ENCODE measurements at regions of chr2 and their contacts with region 1.

Region 1: GRCh38 chr2:234291765-234292204 is 205.1 kb downstream of the ARL4C start:
- DNase-seq: peak in 1 of 4 donors; percentile 31
- ATAC-seq: no peak
- H3K4me3 ChIP-seq: no peak overlapping the region
- H3K27ac ChIP-seq: peak overlapping the region in 1 of 2 donors; percentile 46
- H3K4me1 ChIP-seq: peaks cover 0 to 32% of the 10 kb centered on the region in 2 donors
- H3K27me3 ChIP-seq: no peaks in the 10 kb centered on the region
- CTCF ChIP-seq: no peak

Region 2: DNA sequence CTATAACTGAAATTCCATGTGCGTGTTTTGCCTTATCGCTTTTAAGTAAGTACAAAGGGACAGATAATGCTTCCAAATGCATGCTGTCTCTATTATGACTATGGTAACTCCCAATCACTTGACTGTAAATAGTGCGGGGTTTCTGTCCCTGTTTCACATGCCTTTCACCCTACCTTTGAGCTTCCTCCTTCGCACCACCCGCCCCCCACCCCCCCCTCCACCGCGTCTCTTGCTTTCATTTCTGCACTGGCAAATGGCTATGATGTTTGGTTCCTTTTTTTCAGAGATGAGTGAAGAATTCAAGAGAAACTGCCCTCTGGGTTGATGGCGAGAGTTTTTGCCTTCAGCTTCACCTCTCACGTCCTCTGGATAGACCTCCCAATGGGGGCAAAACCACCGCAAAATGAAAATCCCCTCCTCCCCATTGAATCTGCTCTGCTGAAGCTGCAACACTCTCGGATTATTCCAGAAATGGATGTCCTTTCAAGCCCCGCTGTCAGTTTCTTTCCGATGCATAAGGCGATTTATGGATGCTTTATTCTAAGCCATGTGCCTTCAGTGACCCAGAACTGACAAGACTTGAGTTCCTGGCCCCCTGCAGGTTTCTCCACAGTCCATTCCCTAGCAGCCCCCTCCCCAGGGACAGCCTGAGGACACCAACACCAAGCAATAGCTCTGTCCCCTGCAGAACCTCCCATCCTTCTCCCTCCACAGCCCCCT is 266.2 kb before region 1 on chr2:
- intact Hi-C with region 1: no loop called
- DNase-seq: no peak
- ATAC-seq: no peak
- H3K4me3 ChIP-seq: no peak overlapping the region
- H3K27ac ChIP-seq: no peak overlapping the region
- H3K4me1 ChIP-seq: peaks cover 0 to 4% of the 10 kb centered on the region in 2 donors
- H3K27me3 ChIP-seq: peaks cover 0 to 15% of the 10 kb centered on the region in 2 donors
- CTCF ChIP-seq: no peak

Region 3: GRCh38 chr2:234483568-234484251 is 191.9 kb after region 1 on chr2:
- intact Hi-C with region 1: loop called in 1 of 2 experiments (anchors 5 kb)
- DNase-seq: no peak
- ATAC-seq: peak; percentile 51
- H3K4me3 ChIP-seq: no peak overlapping the region
- H3K27ac ChIP-seq: no peak overlapping the region
- H3K4me1 ChIP-seq: peaks cover 0 to 6% of the 10 kb centered on the region in 2 donors
- H3K27me3 ChIP-seq: no peaks in the 10 kb centered on the region
- CTCF ChIP-seq: peak in 1 of 2 donors; percentile 22

Measured in left lung (tissue), 14 donors.